Right ventricle myocardium superior (tissue), 1 donor: ENCODE measurements at regions of chr7 and their contacts with region 1.

Region 1: DNA sequence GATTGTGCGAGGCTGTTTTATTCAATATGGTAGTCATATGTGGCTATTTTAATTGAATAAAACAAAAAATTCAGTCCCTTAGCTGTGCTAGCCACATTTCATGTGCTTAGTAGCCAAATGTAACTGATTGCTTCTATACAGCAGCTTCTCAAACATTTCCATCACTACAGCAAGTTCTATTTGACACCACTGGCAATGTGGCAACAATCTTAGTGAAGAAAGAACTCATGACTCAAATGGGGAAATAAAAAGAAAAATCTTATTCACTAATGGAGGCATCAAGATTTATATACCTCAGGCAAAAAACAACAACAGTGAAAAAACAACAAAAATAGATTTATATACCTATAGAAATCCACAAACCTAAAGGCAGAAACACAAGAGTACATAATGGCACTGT is 17.9 kb downstream of the SEM1 start:
- DNase-seq: no peak
- ATAC-seq: no peak

Region 2: DNA sequence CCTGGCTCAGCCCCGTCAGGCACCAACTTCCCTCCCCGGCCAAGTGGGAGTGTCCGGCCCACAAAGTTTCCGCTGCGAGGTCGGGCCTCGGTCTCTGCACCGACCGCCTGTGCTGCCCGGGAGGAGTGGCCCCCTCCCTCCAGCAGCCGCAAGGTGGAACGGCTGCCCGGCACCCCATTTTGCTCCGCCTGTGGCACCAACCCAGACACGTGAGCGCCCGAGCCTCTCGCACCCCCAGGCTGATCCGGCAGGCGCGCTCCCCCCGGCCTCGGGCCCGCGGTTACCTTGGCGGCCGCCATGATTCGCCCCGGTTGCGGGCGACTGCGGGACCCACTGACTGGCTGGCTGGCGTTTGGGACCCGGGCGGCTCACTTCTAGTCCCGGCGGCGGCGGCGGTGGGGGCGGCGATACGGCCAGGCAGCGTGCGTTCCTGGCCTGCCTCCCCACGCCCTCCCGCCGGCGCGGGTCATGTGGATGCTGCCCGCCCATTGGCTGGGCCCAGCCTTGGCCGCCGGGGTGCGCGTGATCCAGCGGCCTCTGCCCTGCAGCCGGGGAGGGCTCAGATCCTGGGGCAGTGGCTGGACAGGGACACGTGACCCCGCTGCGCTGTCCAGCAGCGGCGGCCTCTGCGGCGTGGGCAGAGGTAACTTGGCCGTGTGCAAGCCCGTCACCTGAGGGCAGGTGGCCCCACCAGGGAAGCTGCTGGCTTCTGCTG is 369.9 kb before region 1 on chr7 and contains the start of gene SLC25A13:
- intact Hi-C with region 1: loop called (anchors 10 kb)
- DNase-seq: peak; percentile 96
- ATAC-seq: peak; percentile 99
- total RNA-seq, gene SLC25A13: 11.6 TPM